H1 (cell line): ENCODE measurements at regions of chr11 and their contacts with region 1.

Region 1: DNA sequence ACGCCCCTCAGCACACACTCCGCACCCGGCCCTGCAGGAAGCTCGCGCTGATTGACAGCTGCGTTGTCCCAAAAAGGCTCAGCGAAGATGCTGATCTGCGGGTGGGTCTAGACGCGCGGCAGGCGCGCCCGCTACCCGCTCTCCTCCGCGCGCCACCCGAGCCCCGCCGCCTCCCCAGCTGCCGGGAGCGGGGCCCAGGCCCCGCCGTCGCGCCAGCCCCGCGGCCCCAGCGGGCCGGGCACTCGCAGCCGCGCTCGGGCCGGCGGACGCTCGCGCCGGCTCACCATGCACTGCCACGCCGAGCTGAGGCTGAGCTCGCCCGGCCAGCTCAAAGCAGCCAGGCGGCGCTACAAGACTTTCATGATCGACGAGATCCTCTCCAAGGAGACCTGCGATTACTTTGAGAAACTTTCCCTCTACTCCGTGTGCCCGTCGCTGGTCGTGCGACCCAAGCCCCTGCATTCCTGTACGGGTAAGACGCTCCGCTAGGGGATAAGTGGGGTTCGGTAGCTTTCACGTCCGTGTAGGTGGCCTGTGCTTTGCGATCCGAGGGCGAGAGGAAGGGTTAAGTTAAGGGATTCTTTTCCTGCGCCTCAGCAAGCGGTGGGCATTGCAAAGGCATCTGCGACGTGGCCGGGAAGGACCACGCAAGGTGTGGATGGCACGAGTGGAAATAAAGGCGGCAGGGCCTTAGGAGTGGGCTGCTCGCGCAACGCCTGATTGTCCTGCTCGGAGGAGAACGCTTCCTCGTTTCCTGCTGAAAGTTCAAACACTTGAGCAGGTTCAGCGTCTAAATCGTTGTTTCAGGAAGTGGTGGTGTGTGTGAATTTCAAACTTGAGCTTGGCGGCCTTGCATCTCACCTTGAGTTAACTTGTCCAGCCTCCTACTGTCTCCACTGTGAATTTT is at the start of gene BARX2:
- DNase-seq: peak in 1 of 2 experiments; percentile 77
- H3K4me3 ChIP-seq: peak within 1 kb of the TSS; percentile 39 to 61 (median 48)
- H3K27ac ChIP-seq: no peak within 1 kb of the TSS
- H3K4me1 ChIP-seq: peaks cover 0 to 8% (median 6%) of the 10 kb centered on the region in 4 experiments; a peak in 6 of 7 replicates
- H3K27me3 ChIP-seq: peaks cover 45 to 66% (median 63%) of the 10 kb centered on the region in 4 experiments
- CTCF ChIP-seq: peak; percentile 73 to 88 (median 73)
- EP300 ChIP-seq: no peak
- POLR2A ChIP-seq: no peak
- RAD21 ChIP-seq: peak; percentile 80 to 86
- total RNA-seq, gene BARX2: not detected in 2 replicates

Region 2: DNA sequence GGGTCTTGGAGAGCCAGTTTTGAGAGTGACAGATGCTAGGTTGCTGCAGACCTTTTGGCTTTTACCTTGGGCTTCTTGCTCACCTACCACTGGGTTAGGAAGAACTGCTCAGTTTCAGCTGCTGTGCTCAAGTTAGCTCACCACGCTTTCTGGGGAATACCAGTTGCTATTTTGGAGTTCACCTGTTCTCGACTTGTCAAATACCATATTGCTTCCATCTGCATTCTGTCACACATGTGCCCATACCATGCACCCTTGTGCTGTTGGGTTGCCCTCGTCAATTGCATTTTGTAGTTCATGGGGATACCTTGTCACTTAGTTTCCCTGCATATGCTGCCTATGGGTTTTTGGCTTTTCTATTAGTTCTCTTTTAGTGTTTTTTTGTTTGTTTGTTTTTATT is 23.3 kb before region 1 on chr11:
- CTCF ChIA-PET with region 1: no interaction called
- POLR2A ChIA-PET with region 1: no interaction called
- DNase-seq: no peak
- H3K4me3 ChIP-seq: no peak overlapping the region
- H3K27ac ChIP-seq: no peak overlapping the region
- H3K4me1 ChIP-seq: no peaks in the 10 kb centered on the region
- H3K27me3 ChIP-seq: no peaks in the 10 kb centered on the region; a peak in 1 of 7 replicates
- CTCF ChIP-seq: no peak
- EP300 ChIP-seq: no peak
- POLR2A ChIP-seq: no peak
- RAD21 ChIP-seq: no peak

Region 3: DNA sequence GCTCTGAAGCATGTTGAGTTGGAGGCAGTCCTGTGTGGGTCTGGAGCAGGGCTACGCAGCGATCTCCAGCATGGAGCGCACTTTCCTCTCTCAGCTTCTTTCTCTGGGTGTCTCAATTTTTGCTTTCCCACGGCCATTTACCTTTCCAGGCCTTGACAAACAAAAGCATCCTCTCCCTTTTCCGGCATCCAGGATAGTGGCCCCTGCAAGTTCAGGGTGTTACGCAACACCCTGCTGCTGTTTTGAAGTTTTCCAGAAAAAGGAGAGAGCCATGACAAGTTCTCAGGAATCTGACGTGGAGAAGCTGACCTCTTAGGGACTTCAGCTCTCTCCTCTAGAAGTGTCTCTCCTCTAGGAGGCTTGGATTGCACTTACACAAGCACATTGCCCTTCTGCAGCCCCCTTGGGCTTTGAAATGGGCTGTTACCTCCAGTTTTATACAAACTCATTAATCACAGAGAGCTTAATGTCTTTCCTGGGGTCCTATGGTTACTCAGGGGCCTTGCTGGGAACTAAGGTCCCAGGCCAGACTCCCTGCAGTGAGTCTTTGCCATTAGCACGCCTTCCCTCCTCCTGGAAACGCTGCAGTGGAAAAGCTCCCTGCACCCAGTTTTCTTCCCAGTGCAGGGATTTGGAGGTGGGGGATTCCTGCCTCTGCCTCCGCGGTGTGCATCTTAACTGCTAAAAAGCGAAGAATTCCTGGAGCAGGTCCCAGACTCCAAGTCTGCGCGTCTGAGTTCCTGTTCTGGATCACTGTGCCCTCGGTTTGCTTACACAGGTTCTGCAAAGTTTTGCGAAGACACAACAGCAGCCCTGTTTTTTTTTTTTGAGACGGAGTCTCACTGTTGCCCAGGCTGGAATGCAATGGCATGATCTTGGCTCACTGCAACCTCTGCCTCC is 80.0 kb after region 1 on chr11:
- CTCF ChIA-PET with region 1: interaction called, 12 read pairs
- POLR2A ChIA-PET with region 1: no interaction called
- DNase-seq: no peak
- H3K4me3 ChIP-seq: no peak overlapping the region
- H3K27ac ChIP-seq: no peak overlapping the region
- H3K4me1 ChIP-seq: peaks cover 5 to 14% (median 7%) of the 10 kb centered on the region in 4 experiments
- H3K27me3 ChIP-seq: no peaks in the 10 kb centered on the region
- CTCF ChIP-seq: no peak
- EP300 ChIP-seq: no peak
- POLR2A ChIP-seq: no peak
- RAD21 ChIP-seq: no peak

Region 4: DNA sequence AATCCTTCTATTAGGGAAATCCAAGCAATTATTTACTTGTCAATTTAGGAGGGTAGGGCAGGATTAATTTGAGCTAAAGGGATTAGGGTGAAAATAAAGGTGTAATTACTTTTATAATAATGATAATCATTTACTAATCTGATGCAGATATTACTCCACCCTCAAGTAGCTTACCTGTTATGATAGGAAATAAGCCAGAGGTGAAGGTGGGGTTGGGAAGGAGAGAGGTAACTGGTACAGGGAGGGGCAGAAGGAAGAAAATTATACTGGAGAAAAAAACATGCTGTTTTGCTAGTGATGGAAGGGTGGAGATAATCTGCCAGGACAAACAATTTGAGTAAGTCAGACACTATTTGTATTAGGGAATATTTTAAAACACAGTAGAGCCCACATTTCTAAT is 157.4 kb after region 1 on chr11:
- CTCF ChIA-PET with region 1: no interaction called
- POLR2A ChIA-PET with region 1: no interaction called
- DNase-seq: no peak
- H3K4me3 ChIP-seq: no peak overlapping the region
- H3K27ac ChIP-seq: no peak overlapping the region
- H3K4me1 ChIP-seq: no peaks in the 10 kb centered on the region
- H3K27me3 ChIP-seq: no peaks in the 10 kb centered on the region; a peak in 1 of 7 replicates
- CTCF ChIP-seq: no peak
- EP300 ChIP-seq: no peak
- POLR2A ChIP-seq: no peak
- RAD21 ChIP-seq: no peak

Region 5: GRCh38 chr11:129546266-129546665 is 170.3 kb after region 1 on chr11:
- CTCF ChIA-PET with region 1: no interaction called
- POLR2A ChIA-PET with region 1: no interaction called
- DNase-seq: no peak
- H3K4me3 ChIP-seq: no peak overlapping the region
- H3K27ac ChIP-seq: no peak overlapping the region
- H3K4me1 ChIP-seq: no peaks in the 10 kb centered on the region
- H3K27me3 ChIP-seq: no peaks in the 10 kb centered on the region
- CTCF ChIP-seq: no peak
- EP300 ChIP-seq: no peak
- POLR2A ChIP-seq: no peak
- RAD21 ChIP-seq: no peak